ENCODE measurements at regions of chr19 and their contacts with region 1.

Region 1: GRCh38 chr19:42401365-42402303 is 11.5 kb upstream of the CNFN start:
- DNase-seq: peak; percentile 81
- ATAC-seq: peak; percentile 52
- H3K4me3 Mint-ChIP-seq: peak overlapping the region; percentile 65
- H3K27ac Mint-ChIP-seq: peak overlapping the region; percentile 42
- H3K4me1 Mint-ChIP-seq: peaks cover 29% of the 10 kb centered on the region
- H3K27me3 Mint-ChIP-seq: no peaks in the 10 kb centered on the region

Region 2: DNA sequence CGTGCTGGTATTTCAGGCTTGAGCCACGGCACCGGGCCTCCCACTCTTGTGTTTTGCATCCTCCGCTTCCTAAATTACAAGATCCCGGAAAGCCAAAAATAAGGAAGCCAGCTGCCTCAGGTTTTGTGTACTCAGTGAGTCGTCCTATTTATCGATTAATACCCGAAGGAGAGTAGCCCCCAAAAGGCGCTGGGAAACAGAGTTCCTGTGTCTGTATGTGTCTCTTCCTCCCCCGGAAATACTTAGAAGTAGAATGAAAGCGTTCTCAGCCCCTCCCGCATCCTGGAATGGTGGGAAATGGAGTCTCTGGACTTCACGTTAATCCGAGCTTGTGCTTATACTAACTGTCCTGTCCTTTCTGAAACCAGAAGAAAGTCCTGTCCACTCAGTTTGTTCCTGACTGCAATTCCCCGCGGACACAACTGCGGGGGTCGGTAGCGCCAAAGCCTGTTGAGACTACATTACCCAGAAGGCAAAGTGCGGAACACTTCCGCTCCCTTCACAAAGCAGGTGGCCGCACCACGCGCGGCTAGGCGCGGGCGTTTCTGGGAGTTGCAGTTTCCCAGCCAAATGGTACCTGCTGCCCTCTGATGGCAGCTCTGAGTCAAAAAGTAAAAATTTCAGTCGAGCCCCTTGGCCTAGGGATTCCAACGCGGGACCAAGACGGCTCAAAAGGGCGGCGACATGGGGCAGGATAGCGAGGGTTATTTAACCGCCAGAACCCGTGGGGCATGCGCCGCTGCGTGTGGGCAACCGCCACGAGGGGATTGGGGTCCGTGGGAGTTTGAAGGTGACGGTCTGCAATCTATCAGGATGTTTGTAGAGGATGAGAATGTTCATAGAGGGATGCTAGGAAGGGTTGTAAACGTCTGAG is 157.1 kb before region 1 on chr19:
- CTCF ChIA-PET with region 1: no interaction called
- DNase-seq: peak; percentile 97
- ATAC-seq: peak; percentile 56
- H3K4me3 Mint-ChIP-seq: peak overlapping the region; percentile 90
- H3K27ac Mint-ChIP-seq: peak overlapping the region; percentile 95
- H3K4me1 Mint-ChIP-seq: peaks cover 30% of the 10 kb centered on the region
- H3K27me3 Mint-ChIP-seq: no peaks in the 10 kb centered on the region

Region 3: DNA sequence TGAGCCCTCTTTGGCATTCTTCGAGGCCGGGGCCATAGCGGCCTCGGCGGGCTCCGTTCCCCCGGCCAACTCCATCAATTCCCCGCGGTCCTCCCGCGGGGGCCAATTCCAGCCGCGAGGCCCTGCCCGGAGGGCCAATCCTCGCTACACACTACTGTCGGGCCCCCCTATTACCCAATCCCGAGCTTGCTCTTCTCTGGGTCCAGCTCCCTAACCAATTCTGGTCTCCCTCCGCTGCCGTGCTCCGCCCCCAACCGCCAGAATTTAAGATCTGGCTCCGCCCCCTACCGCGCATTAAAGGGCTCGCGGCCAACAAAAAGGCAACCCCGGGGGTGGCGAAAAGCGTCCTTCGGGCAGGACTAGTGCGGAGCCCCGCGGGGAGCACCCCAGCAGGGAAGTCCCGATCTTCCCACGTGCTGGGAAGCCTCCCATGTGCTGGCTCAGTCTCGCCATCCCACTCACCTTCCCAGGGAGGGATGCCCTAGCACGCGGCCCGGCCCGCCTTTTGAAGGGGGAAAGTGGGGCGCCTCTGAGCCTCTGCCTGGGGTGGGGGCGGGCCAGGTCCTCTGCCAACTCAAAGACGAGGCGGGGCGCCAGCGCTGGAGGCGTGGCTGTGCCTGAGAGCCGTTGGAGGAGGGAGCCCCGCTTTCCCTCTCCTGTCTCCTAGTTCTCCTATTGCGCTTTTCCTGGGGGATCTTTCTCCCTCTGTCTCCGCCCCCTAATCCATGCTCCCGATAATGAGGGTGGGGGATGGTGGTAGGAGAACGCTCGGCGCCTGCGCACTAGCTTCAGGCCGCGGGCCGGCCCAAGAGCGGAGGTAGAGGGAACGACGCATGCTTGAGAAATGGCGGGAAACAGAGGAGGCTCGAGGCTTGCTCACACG is 22.1 kb after region 1 on chr19:
- CTCF ChIA-PET with region 1: interaction called, 11 read pairs
- DNase-seq: peak; percentile 97
- ATAC-seq: peak; percentile 98
- H3K4me3 Mint-ChIP-seq: peak overlapping the region; percentile 94
- H3K27ac Mint-ChIP-seq: peak overlapping the region; percentile 90
- H3K4me1 Mint-ChIP-seq: peaks cover 37% of the 10 kb centered on the region
- H3K27me3 Mint-ChIP-seq: peaks cover 3% of the 10 kb centered on the region

Measured in activated CD8-positive, alpha-beta memory T cell treated with anti-CD3 and anti-CD28 coated beads, Interleukin-2, amount 10 ng/mL, durations not matched to agents 7 days and 5 days (primary cell).